Sciatic nerve (tissue), 2 donors: ENCODE measurements at regions of chr11 and their contacts with region 1.

Region 1: DNA sequence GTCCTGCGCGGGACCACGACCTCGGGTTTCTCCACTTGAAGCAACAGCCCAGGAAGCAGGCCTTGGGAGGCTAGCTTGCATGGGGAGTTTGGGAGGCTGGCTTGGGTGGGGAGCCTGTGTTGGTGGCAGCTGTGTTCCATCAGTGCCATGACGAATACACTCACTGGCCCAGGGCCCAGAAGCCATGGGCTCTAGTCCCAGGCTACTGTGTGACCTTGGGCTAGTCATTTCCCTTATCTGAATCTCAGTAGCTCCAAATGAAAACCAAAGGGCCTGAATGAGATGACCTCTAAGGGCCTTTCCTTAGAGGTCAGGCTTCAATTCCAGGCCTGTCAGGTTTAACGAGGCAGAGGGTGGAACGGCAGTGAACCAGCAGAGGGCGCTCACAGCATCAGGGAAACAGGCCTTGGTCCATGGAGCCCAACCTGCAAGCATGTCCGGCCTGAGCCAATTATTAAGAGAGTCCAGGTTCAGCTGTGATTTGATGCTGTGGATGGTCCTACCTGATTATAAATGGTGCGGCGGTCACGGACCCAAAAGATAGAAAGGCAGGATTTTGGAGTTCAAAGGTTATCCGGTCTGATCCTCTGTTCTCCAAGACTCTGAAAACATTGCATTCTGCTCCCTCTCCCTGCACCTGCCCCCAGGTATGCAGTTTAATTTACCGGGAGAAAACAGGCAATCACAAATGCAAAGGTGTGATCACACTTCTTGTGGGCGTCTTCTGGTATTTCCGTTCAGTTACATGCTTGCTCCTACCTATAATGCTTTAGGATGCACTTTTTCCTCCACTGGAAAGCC is 15.9 kb downstream of the PTPN5 start:
- DNase-seq: peak; percentile 80
- ATAC-seq: peak; percentile 20

Region 2: GRCh38 chr11:18927550-18928322 is 152.0 kb after region 1 on chr11:
- intact Hi-C with region 1: no loop called
- DNase-seq: no peak
- ATAC-seq: no peak

Region 3: GRCh38 chr11:19145319-19145718 is 369.6 kb after region 1 on chr11:
- intact Hi-C with region 1: loop called (anchors 10 kb)
- DNase-seq: no peak
- ATAC-seq: no peak